Kidney (tissue), 22 donors: ENCODE measurements at regions of chr1 and their contacts with region 1.

Region 1: GRCh38 chr1:75265792-75266191 is 131.6 kb downstream of the LHX8 start:
- DNase-seq: peak in 3 of 5 donors; percentile 14 to 75 (median 69)
- H3K4me3 ChIP-seq: no peak overlapping the region
- H3K27ac ChIP-seq: no peak overlapping the region
- H3K4me1 ChIP-seq: no peaks in the 10 kb centered on the region
- H3K27me3 ChIP-seq: no peaks in the 10 kb centered on the region
- CTCF ChIP-seq: peak; percentile 58

Region 2: DNA sequence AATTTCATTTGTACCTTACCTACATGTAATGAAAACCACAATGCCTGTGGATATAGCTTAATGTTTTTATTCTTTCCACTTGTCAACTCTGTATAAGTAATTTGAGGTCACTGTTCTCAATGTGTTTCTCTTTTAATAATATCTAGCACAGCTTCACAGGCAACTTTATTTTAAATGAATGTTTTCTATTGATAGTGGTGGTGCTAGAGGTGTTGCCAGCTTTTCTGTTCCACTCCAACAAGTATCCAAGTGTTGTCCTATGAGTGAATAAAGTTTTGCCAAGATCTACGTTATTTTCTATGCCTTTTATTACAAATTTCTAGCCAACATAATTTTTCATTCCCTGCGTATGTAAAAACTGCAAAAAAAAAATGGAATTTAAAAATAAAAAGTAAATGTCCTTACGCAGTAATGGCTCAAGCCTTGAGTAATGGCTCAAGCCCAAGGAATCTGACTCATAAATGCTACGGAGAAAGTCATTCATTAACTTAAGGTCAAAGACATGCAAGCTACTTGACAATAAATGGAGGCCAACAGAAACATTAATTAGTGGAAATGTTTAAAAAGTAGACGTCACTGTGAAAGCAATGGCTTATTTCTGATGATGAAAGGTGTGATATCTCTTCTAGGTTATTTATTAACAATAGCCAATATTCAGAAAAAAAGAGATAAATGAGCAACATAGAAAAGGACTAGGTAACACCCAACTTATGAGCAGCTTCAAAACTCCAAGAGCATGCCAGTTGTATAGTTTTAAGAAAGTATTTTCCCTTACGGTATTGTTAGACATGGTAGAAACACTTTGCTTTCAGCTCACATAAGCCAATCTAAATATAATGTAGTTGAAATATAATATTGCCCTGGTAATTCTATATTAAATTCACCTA is 273.7 kb after region 1 on chr1:
- intact Hi-C with region 1: no loop called
- DNase-seq: peak in 2 of 5 donors; percentile 16 to 40
- H3K4me3 ChIP-seq: no peak overlapping the region
- H3K27ac ChIP-seq: no peak overlapping the region
- H3K4me1 ChIP-seq: peaks cover 0 to 4% (median 0%) of the 10 kb centered on the region in 3 donors
- H3K27me3 ChIP-seq: no peaks in the 10 kb centered on the region
- CTCF ChIP-seq: no peak

Region 3: DNA sequence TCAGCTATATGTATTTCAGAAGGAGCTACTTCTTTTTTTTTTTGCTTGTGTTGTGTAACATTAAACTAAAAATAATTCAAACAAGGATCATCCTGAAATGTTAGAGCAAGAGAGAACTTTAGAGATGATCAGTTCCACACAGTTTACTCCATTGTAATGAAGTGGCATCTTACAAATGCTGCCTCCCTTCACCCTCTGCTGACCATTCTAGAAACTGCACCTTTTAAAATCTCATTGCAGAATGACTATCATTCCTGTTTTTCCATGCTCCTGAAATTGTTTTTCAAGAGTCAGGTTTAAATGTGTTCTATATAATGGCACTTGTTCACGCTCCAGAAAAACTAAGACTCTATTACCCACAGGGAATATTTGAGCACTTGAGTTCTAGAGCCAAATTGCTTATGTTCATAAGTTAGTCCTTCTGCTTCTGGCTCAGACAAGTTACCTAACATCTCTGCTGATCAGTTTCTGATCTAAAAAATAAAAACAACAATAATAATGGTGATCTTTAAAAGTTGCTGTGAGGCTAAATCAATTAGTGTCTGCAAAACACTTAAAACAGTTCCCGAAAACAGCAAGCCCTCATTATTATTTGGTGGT is 366.7 kb after region 1 on chr1:
- intact Hi-C with region 1: loop called (anchors 5 kb)
- DNase-seq: peak in 2 of 5 donors; percentile 41 to 61
- H3K4me3 ChIP-seq: no peak overlapping the region
- H3K27ac ChIP-seq: no peak overlapping the region
- H3K4me1 ChIP-seq: no peaks in the 10 kb centered on the region
- H3K27me3 ChIP-seq: no peaks in the 10 kb centered on the region
- CTCF ChIP-seq: peak; percentile 68